ENCODE measurements at regions of chr16 and their contacts with region 1.

Region 1: GRCh38 chr16:12067714-12068401 is 91.3 kb downstream of the SNX29 start:
- DNase-seq: peak; percentile 74
- H3K4me3 Mint-ChIP-seq: no peak overlapping the region
- H3K27ac Mint-ChIP-seq: no peak overlapping the region
- H3K4me1 Mint-ChIP-seq: no peaks in the 10 kb centered on the region
- H3K27me3 Mint-ChIP-seq: no peaks in the 10 kb centered on the region

Region 2: GRCh38 chr16:11742539-11743307 is 325.1 kb before region 1 on chr16 and contains the start of gene TXNDC11:
- CTCF ChIA-PET with region 1: no interaction called
- POLR2A ChIA-PET with region 1: no interaction called
- intact Hi-C with region 1: loop called (anchors 1 kb)
- DNase-seq: peak; percentile 99
- H3K4me3 Mint-ChIP-seq: peak within 1 kb of the TSS; percentile 89
- H3K27ac Mint-ChIP-seq: peak within 1 kb of the TSS; percentile 94
- H3K4me1 Mint-ChIP-seq: peaks cover 47% of the 10 kb centered on the region
- H3K27me3 Mint-ChIP-seq: no peaks in the 10 kb centered on the region
- total RNA-seq, gene TXNDC11: 28.4 to 29.9 TPM

Region 3: GRCh38 chr16:11851294-11852091 is 216.4 kb before region 1 on chr16 and contains the start of gene RSL1D1:
- CTCF ChIA-PET with region 1: interaction called, 14 read pairs
- POLR2A ChIA-PET with region 1: interaction called, 3 read pairs
- intact Hi-C with region 1: loop called (anchors 5 kb)
- DNase-seq: peak; percentile 96
- H3K4me3 Mint-ChIP-seq: peak within 1 kb of the TSS; percentile 94
- H3K27ac Mint-ChIP-seq: peak within 1 kb of the TSS; percentile 89
- H3K4me1 Mint-ChIP-seq: peaks cover 52% of the 10 kb centered on the region
- H3K27me3 Mint-ChIP-seq: no peaks in the 10 kb centered on the region
- total RNA-seq, gene RSL1D1: 287 to 296 TPM

Region 4: GRCh38 chr16:11949527-11949926 is 118.3 kb before region 1 on chr16:
- CTCF ChIA-PET with region 1: interaction called, 20 read pairs
- POLR2A ChIA-PET with region 1: no interaction called
- intact Hi-C with region 1: loop called (anchors 1 kb)
- DNase-seq: peak; percentile 20
- H3K4me3 Mint-ChIP-seq: no peak overlapping the region
- H3K27ac Mint-ChIP-seq: no peak overlapping the region
- H3K4me1 Mint-ChIP-seq: no peaks in the 10 kb centered on the region
- H3K27me3 Mint-ChIP-seq: no peaks in the 10 kb centered on the region

Region 5: GRCh38 chr16:11977376-11978041 is 90.3 kb before region 1 on chr16:
- CTCF ChIA-PET with region 1: interaction called, 7 read pairs
- POLR2A ChIA-PET with region 1: no interaction called
- intact Hi-C with region 1: loop called (anchors 5 kb)
- DNase-seq: no peak
- H3K4me3 Mint-ChIP-seq: peak overlapping the region; percentile 95
- H3K27ac Mint-ChIP-seq: peak overlapping the region; percentile 58
- H3K4me1 Mint-ChIP-seq: peaks cover 33% of the 10 kb centered on the region
- H3K27me3 Mint-ChIP-seq: no peaks in the 10 kb centered on the region

Region 6: GRCh38 chr16:12043953-12044352 is 23.9 kb before region 1 on chr16:
- CTCF ChIA-PET with region 1: no interaction called
- POLR2A ChIA-PET with region 1: no interaction called
- intact Hi-C with region 1: no loop called
- DNase-seq: no peak
- H3K4me3 Mint-ChIP-seq: no peak overlapping the region
- H3K27ac Mint-ChIP-seq: no peak overlapping the region
- H3K4me1 Mint-ChIP-seq: no peaks in the 10 kb centered on the region
- H3K27me3 Mint-ChIP-seq: no peaks in the 10 kb centered on the region

Region 7: DNA sequence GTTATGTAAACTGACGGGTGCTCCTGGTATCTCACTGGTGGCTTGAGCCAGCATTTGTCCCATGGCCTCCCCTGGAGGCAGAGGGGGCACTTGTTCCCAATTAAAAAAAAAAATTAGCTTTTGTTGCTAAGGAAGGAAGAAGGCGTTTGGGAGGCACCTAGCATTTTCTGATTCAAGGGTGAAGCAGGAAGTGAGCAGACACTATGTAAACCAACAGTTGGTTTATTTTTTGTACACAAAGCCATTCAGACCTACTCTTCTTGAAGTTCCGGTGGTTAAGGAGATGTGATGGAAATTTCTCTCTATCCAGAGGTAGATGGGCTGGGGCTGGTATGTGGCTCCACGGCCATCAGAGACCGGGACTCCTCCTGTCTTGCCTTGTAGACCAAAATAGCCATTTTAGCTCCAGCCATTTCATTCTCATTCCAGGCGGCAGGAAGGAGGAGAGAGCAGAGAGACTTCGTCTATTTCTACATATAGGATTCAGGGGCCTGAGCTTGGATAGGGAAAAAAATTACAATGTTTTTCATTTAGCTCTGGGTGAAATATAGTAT is 11.6 kb after region 1 on chr16:
- CTCF ChIA-PET with region 1: interaction called, 42 read pairs
- POLR2A ChIA-PET with region 1: no interaction called
- intact Hi-C with region 1: no loop called
- DNase-seq: no peak
- H3K4me3 Mint-ChIP-seq: peak overlapping the region; percentile 32
- H3K27ac Mint-ChIP-seq: peak overlapping the region; percentile 94
- H3K4me1 Mint-ChIP-seq: peaks cover 65% of the 10 kb centered on the region
- H3K27me3 Mint-ChIP-seq: no peaks in the 10 kb centered on the region